ENCODE measurements at regions of chr5 and their contacts with region 1.

Region 1: GRCh38 chr5:31531888-31532710 is at the starts of genes C5orf22 and DROSHA:
- DNase-seq: peak; percentile 70 to 96
- H3K4me3 ChIP-seq: peak within 1 kb of the TSS; percentile 75 to 85
- H3K27ac ChIP-seq: peak within 1 kb of the TSS; percentile 60 to 85
- H3K4me1 ChIP-seq: peaks cover 0 to 20% of the 10 kb centered on the region in 2 donors
- H3K27me3 ChIP-seq: no peaks in the 10 kb centered on the region
- CTCF ChIP-seq: no peak
- total RNA-seq, gene C5orf22: 18.5 TPM
- total RNA-seq, gene DROSHA: 54.9 TPM

Region 2: DNA sequence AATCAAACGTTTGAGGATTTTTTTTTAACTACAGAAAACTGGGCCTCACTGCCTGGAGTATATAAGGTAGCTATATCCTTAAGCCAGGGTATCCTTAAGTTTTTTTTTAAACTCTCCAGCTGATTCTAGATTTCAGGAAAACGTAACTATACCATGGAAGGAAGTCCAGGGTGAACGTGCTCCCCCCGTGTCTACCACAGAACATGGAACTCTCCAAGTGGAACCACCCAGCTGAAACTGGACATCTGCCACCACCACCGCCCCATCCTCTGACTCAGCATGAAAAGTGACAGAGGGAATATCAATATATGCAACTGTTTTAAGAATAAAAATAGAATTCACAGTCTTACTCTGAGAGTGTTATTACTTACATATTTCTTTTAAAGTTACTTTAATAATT is 61.5 kb before region 1 on chr5:
- intact Hi-C with region 1: no loop called
- DNase-seq: peak in 1 of 2 donors; percentile 66
- H3K4me3 ChIP-seq: no peak overlapping the region
- H3K27ac ChIP-seq: no peak overlapping the region
- H3K4me1 ChIP-seq: no peaks in the 10 kb centered on the region
- H3K27me3 ChIP-seq: no peaks in the 10 kb centered on the region
- CTCF ChIP-seq: no peak

Region 3: GRCh38 chr5:31511305-31511704 is 20.8 kb before region 1 on chr5:
- intact Hi-C with region 1: no loop called
- DNase-seq: no peak
- H3K4me3 ChIP-seq: no peak overlapping the region
- H3K27ac ChIP-seq: no peak overlapping the region
- H3K4me1 ChIP-seq: no peaks in the 10 kb centered on the region
- H3K27me3 ChIP-seq: no peaks in the 10 kb centered on the region
- CTCF ChIP-seq: no peak

Region 4: GRCh38 chr5:31561946-31562345 is 29.8 kb after region 1 on chr5:
- intact Hi-C with region 1: no loop called
- DNase-seq: no peak
- H3K4me3 ChIP-seq: no peak overlapping the region
- H3K27ac ChIP-seq: no peak overlapping the region
- H3K4me1 ChIP-seq: no peaks in the 10 kb centered on the region
- H3K27me3 ChIP-seq: no peaks in the 10 kb centered on the region
- CTCF ChIP-seq: no peak

Region 5: GRCh38 chr5:32027717-32028321 is 495.7 kb after region 1 on chr5:
- intact Hi-C with region 1: loop called (anchors 5 kb)
- DNase-seq: peak; percentile 31 to 90
- H3K4me3 ChIP-seq: no peak overlapping the region
- H3K27ac ChIP-seq: peak overlapping the region; percentile 39 to 49
- H3K4me1 ChIP-seq: peaks cover 0 to 22% of the 10 kb centered on the region in 2 donors
- H3K27me3 ChIP-seq: no peaks in the 10 kb centered on the region
- CTCF ChIP-seq: no peak

Region 6: DNA sequence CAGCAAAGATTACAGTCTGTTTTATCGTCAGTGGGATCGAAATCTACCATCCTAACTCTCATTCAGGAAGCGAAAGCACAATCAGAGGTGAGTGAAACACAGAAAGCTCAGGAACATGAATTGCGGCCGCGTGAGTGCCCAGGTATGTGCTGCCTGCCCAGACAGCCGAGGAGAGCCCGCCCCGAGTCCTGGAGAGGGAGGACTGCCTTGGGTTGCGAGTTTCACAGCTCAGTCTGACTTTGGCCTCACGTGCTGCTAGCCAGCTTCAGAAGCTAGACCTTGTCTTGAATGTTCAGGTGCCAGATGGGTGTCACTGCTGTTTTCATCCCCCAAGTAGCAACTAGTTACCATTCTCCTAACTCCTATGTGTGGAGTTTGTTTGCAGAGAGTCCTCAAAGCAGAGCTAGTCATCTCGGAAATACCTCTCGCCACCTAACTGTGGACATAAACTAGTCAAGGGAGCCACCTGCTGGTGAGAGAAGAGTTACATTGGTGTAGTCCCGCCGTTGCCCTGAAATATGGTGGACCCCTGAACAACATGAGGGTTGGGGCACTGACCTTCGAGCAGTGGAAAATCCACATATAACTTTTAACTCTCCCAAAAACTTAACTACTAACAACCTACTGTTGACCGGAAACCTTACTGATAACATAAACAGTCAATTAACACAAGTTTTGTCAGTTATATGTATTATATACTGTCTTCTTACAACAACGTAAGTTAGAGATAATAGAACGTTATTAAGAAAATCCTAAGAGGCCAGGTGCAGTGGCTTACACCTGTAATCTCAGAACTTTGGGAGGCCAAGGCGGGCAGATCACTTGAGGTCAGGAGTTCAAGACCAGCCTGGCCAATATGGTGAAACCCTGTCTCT is 561.1 kb after region 1 on chr5:
- intact Hi-C with region 1: loop called (anchors 5 kb)
- DNase-seq: peak in 1 of 2 donors; percentile 78
- H3K4me3 ChIP-seq: no peak overlapping the region
- H3K27ac ChIP-seq: no peak overlapping the region
- H3K4me1 ChIP-seq: peaks cover 0 to 7% of the 10 kb centered on the region in 2 donors
- H3K27me3 ChIP-seq: no peaks in the 10 kb centered on the region
- CTCF ChIP-seq: peak; percentile 65 to 71 (median 65)

Region 7: DNA sequence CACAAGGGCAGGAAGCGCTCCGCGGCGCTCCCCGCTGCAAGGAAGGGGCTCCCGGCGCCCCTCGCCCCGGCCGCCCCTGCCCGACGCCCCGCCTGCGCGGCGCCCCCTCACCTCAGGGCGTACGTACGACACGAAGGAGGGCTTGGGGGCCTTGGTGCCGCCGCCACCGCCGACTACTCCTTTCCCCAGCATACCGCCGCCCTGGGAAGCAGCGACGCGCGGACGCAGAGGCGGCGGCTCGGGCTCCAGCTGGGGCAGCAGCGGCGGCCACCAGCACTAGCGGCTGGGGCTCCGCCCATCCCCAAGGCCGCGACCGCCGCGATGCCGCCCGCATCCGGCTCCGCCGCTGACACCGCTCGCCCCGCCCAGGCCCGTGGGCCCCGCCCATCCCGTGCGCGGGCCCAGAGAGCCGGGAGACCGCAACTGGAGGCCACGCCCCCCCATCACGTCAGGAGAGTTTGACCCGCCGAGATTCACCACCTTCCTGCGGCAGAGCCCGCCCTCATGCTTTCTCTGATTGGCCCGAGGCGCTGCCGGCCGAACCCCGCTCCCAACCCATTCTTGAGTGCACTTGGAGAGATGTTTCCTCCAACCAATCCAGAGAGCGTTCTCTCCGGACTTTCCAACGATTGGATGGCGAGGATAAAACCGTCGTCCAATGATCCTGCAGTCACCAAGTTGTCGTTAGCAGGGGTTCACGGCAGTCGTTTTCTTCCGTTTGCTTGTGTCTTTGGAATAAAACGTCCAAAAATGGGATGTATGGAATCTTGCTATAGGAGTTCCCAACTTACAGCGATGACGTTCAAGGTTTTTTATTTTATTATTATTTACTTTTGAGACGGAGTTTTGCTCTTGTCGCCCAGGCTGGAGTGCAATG is 780.8 kb after region 1 on chr5 and contains the start of gene MTMR12:
- intact Hi-C with region 1: loop called (anchors 5 kb)
- DNase-seq: peak; percentile 99 to 100
- H3K4me3 ChIP-seq: peak within 1 kb of the TSS; percentile 80 to 95
- H3K27ac ChIP-seq: peak within 1 kb of the TSS; percentile 94 to 95
- H3K4me1 ChIP-seq: peaks cover 6 to 14% of the 10 kb centered on the region in 2 donors
- H3K27me3 ChIP-seq: no peaks in the 10 kb centered on the region
- CTCF ChIP-seq: no peak
- total RNA-seq, gene MTMR12: 19.5 TPM